CD4-positive, alpha-beta T cell (primary cell): ENCODE measurements at regions of chr2 and their contacts with region 1.

Region 1: DNA sequence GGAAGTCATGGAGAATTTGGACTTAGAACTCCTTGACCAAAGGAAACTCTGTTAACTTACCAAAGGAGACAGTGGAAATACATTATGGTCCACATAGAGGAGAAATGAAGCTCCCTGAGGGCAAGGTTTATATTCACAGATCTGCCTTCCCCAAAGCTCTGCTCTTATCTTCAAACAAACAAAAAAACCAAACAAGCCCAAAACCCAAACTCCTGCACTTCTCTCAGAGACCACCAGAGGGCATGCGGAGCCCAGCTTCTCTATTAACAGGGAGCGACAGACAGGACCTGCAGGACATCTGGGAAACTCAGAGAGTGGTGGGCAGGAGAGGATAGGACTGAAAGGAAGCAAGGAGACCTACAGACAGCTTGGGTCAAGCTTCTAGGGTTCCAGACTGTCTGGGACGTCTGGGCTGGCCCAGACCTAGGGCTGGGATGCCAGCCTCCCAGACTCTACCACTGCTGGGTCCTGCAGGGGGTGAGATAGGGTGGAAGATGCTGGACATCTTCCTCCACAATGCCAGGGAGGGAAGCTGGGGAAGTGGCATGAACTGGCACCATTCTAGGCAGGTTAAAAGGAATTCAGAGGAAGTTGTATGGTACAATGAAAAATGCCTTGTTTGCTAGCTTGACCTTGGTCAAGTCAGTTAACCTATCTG is 4.0 kb upstream of the WNT10A start:
- DNase-seq: peak; percentile 54 to 87 (median 73)
- ATAC-seq: no peak
- H3K4me3 ChIP-seq: no peak overlapping the region
- H3K4me3 Mint-ChIP-seq: peak overlapping the region; percentile 8
- H3K27ac ChIP-seq: no peak overlapping the region
- H3K27ac Mint-ChIP-seq: peak overlapping the region; percentile 6
- H3K4me1 ChIP-seq: peaks cover 78% of the 10 kb centered on the region
- H3K4me1 Mint-ChIP-seq: peaks cover 54% of the 10 kb centered on the region
- H3K27me3 ChIP-seq: peaks cover 29 to 36% of the 10 kb centered on the region in 2 experiments
- H3K27me3 Mint-ChIP-seq: peaks cover 45% of the 10 kb centered on the region
- CTCF ChIP-seq: peak; percentile 98

Region 2: GRCh38 chr2:218892693-218893348 is 16.1 kb after region 1 on chr2:
- CTCF ChIA-PET with region 1: interaction called, 500 read pairs
- POLR2A ChIA-PET with region 1: interaction called, 455 read pairs
- intact Hi-C with region 1: loop called (anchors 1 kb)
- DNase-seq: peak; percentile 73 to 97 (median 84)
- ATAC-seq: peak; percentile 73
- H3K4me3 ChIP-seq: peak overlapping the region; percentile 56
- H3K4me3 Mint-ChIP-seq: peak overlapping the region; percentile 82
- H3K27ac ChIP-seq: peak overlapping the region; percentile 83 to 91
- H3K27ac Mint-ChIP-seq: peak overlapping the region; percentile 91
- H3K4me1 ChIP-seq: peaks cover 65% of the 10 kb centered on the region
- H3K4me1 Mint-ChIP-seq: peaks cover 50% of the 10 kb centered on the region
- H3K27me3 ChIP-seq: no peaks in the 10 kb centered on the region
- H3K27me3 Mint-ChIP-seq: no peaks in the 10 kb centered on the region
- CTCF ChIP-seq: peak; percentile 45

Region 3: DNA sequence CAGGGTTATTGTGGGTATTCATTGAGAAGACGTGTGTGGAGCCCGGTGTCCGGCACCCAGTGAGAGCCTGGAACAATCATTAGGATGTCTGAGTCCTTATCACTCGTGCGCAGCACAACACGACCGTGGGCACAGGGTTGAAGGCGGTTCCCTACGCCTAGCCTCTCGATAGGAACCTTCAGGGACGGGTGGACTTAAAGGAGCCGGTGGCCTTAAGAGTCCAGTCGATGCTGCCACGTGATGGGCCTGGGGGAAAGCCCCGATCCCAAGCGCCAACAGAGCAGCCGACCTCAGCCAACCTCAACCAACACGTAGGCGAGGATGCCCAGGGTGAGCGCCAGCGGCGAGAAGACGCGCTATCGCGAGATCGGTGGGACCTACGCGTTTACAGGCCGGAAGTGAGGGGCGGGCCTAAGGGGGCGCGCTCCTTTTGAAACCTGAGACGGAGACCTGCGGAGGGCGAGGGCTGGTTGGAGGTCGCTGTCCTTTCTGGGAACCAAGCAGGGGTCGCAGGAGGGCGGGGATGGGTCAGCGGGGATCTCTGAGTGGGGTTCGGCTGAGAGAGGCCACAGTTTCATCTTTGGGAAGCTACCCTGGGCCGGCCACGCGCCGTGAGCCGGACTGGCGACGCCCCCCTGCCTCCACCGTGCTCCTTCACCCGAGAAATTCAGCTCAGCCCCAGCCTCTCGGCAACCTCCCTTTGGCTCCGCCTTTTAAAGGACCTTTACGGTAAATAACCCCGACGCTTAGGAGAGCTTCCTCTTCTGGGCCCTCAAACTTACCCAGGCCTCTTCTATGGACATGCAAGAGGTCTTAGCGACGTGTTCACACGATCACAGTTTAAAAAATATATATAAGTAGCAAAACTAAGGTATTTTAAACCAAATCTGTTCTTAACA is 32.3 kb after region 1 on chr2:
- CTCF ChIA-PET with region 1: interaction called, 10 read pairs
- POLR2A ChIA-PET with region 1: interaction called, 3 read pairs
- intact Hi-C with region 1: no loop called
- DNase-seq: peak; percentile 78 to 95 (median 84)
- ATAC-seq: peak; percentile 100
- H3K4me3 ChIP-seq: peak overlapping the region; percentile 68
- H3K4me3 Mint-ChIP-seq: peak overlapping the region; percentile 85
- H3K27ac ChIP-seq: no peak overlapping the region
- H3K27ac Mint-ChIP-seq: peak overlapping the region; percentile 78
- H3K4me1 ChIP-seq: peaks cover 15% of the 10 kb centered on the region
- H3K4me1 Mint-ChIP-seq: peaks cover 13% of the 10 kb centered on the region
- H3K27me3 ChIP-seq: peaks cover 4 to 8% of the 10 kb centered on the region in 2 experiments
- H3K27me3 Mint-ChIP-seq: peaks cover 41% of the 10 kb centered on the region
- CTCF ChIP-seq: no peak